Calu3 (cell line): ENCODE measurements at regions of chr14 and their contacts with region 1.

Region 1: DNA sequence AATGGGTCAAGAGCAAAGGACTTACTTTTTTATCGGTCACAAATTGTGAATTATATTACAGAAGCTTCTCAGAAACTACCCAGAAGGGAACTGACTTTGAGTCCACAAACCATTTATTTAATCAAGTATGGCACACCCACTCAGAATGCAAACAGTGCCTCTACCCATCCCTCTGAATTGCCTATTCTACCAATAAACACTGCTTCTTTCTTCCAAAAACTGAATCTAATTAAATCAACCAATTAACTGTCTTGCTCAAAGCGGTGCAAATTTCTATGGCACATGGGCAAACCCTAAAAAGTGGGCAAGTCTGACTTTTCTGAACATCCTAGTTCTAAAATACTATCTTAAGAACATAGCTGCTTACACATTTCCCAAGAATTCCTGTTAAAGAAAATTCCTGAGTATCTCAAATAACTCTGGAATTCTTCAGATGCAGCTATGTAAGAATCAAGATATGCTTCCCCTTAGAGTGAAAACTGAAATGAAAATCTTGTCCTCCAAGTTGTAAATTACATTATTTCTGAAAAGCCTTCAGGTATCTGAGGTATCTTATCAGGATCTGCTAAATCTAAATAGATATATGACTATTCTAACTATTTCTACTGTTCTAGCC is 4.3 kb downstream of the SPTLC2 start:
- DNase-seq: no peak
- H3K4me3 Mint-ChIP-seq: no peak overlapping the region
- H3K27ac Mint-ChIP-seq: no peak overlapping the region
- H3K4me1 Mint-ChIP-seq: peaks cover 32% of the 10 kb centered on the region
- H3K27me3 Mint-ChIP-seq: no peaks in the 10 kb centered on the region
- CTCF ChIP-seq: no peak

Region 2: DNA sequence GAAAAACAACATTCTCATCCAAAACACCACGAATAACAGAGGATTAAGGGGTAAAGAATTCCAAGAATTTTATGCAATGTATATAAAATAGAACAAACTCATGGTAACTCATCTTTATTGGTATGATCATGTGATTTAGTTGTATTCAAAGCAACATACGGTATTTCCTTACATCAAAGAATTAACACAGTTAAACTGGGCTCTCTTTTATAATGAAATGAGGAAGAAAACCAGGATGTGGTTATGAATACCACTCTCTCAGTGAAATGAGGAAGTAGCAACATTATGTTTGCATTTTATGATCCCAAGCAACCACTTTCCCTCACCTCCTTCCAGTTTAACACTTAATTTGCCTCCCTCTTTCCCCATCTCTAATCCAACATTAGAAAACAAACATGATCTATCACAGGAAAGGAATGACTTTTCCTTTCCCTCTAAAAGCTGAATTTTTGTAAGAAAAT is 18.6 kb before region 1 on chr14:
- CTCF ChIA-PET with region 1: interaction called, 3 read pairs
- intact Hi-C with region 1: loop called (anchors 2 kb)
- DNase-seq: no peak
- H3K4me3 Mint-ChIP-seq: peak overlapping the region; percentile 26
- H3K27ac Mint-ChIP-seq: peak overlapping the region; percentile 79
- H3K4me1 Mint-ChIP-seq: peaks cover 42% of the 10 kb centered on the region
- H3K27me3 Mint-ChIP-seq: no peaks in the 10 kb centered on the region
- CTCF ChIP-seq: no peak